T-cell (primary cell): ENCODE measurements at regions of chr1 and their contacts with region 1.

Region 1: GRCh38 chr1:156728597-156729462 is at the start of gene ISG20L2:
- DNase-seq: peak; percentile 63 to 99 (median 95)
- ATAC-seq: peak; percentile 91 to 94 (median 92)
- H3K4me3 ChIP-seq: peak within 1 kb of the TSS; percentile 91 to 97
- H3K4me3 Mint-ChIP-seq: no peak within 1 kb of the TSS
- H3K27ac ChIP-seq: peak within 1 kb of the TSS; percentile 100
- H3K27ac Mint-ChIP-seq: peak within 1 kb of the TSS; percentile 86 to 94
- H3K4me1 ChIP-seq: peaks cover 26 to 49% of the 10 kb centered on the region in 2 experiments
- H3K4me1 Mint-ChIP-seq: peaks cover 17 to 25% (median 23%) of the 10 kb centered on the region in 3 donors
- H3K27me3 ChIP-seq: no peaks in the 10 kb centered on the region
- H3K27me3 Mint-ChIP-seq: no peaks in the 10 kb centered on the region
- total RNA-seq, gene ISG20L2: 35.3 to 63.7 (median 44.3) TPM

Region 2: GRCh38 chr1:156689035-156689952 is 39.5 kb before region 1 on chr1:
- CTCF ChIA-PET with region 1: interaction called, 25 to 68 read pairs
- POLR2A ChIA-PET with region 1: interaction called in 1 of 2 experiments, 3 read pairs
- DNase-seq: peak; percentile 43 to 84 (median 70)
- ATAC-seq: peak; percentile 94 to 96 (median 96)
- H3K4me3 ChIP-seq: no peak overlapping the region
- H3K4me3 Mint-ChIP-seq: peak overlapping the region in 1 of 3 donors; percentile 25
- H3K27ac ChIP-seq: no peak overlapping the region
- H3K27ac Mint-ChIP-seq: peak overlapping the region in 1 of 2 donors; percentile 12
- H3K4me1 ChIP-seq: peaks cover 18 to 32% of the 10 kb centered on the region in 2 experiments
- H3K4me1 Mint-ChIP-seq: peaks cover 23 to 33% (median 26%) of the 10 kb centered on the region in 3 donors
- H3K27me3 ChIP-seq: peaks cover 5 to 84% of the 10 kb centered on the region in 2 experiments
- H3K27me3 Mint-ChIP-seq: peaks cover 41 to 61% of the 10 kb centered on the region in 2 donors

Region 3: DNA sequence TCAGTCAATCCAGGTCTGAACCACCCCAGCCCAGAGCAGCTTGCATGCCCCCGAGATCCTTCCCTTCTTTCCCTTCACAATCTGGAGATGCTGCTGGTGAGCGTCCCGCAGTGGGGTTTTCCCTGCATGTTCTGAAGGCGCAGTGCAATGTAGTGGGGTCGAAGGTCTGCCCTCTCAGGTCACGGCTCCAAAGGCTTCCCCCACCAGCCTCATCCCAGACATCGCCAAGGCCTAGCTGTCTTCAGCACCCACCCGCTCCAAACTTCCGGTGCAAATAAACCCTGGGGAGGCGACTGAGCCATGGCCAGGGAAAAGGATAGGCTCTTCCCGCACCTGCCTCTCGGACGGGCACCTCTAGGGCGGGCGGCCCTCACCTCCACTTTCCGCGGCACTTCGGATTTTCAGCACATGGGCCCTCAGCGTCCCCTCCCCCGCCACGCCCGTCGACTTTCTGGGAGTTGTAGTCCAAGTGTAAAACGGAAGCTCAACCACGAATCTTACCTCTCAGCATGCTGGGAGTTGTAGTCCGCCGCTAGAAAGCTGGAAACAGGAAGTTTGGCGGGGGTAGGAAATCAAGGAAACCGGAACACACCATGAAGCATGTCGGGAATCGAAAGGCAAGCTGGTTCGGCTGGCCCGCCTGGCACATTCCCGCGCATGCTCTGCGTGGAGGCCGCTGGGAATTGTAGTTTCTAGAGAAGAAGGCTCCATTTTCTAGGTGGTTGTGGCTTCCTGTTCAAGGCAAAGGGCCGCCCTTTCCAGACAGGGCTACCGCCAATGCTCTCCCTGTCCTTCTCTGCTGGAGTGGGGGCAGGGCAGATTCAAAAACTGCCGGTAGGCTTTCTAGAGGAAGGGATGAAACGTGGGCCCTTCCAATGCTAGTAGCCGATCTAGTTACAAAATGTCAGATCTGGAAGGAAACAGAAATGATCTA is 12.1 kb after region 1 on chr1 and contains the start of gene MRPL24:
- CTCF ChIA-PET with region 1: interaction called in 1 of 2 experiments, 43 read pairs
- POLR2A ChIA-PET with region 1: interaction called, 7 to 29 read pairs
- DNase-seq: peak; percentile 85 to 99 (median 97)
- ATAC-seq: peak; percentile 89 to 93 (median 91)
- H3K4me3 ChIP-seq: peak within 1 kb of the TSS; percentile 58 to 70
- H3K4me3 Mint-ChIP-seq: peak within 1 kb of the TSS; percentile 96 to 99 (median 97)
- H3K27ac ChIP-seq: peak within 1 kb of the TSS; percentile 89
- H3K27ac Mint-ChIP-seq: peak within 1 kb of the TSS; percentile 98 to 99
- H3K4me1 ChIP-seq: peaks cover 14 to 17% of the 10 kb centered on the region in 2 experiments
- H3K4me1 Mint-ChIP-seq: peaks cover 42 to 45% (median 43%) of the 10 kb centered on the region in 3 donors
- H3K27me3 ChIP-seq: no peaks in the 10 kb centered on the region
- H3K27me3 Mint-ChIP-seq: no peaks in the 10 kb centered on the region
- total RNA-seq, gene MRPL24: 23.8 to 66.6 (median 52.6) TPM

Region 4: DNA sequence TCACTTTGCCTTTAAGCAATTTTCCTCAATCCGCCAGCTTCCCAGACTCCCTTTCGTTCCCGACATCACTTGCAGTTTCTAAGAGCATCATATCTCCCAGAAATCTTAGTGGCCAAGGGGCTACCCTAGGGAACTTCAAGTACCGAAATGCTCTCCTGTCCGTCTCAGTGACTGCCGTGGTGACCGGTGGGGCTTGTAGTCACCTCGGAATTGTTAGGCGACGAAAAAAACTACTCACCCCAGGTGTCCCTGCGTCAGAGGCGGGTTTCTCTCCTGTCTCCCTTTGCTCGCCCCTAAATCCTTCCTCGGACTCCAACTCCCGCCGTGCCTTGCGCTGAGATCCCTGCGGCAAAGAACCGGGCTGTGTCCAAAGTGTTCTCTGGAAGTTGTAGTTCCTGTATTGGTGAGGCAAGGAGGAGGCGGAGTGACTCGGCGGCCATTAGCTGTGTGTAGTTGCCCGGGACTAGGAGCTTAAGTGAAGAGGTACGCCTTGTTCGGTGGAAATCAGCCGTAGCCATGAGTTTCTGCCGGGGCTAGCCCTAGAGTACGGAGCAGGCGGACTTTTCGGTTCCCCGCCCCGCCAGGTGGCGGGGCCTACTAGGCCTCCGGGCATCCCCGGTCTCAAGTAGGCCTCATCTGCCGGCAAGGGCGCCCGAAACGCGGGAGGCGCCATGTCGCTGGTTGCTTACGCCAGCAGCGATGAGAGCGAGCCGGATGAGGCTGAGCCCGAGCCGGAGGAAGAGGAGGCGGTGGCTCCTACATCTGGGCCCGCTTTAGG is 38.5 kb after region 1 on chr1 and contains the start of gene PRCC:
- CTCF ChIA-PET with region 1: interaction called in 1 of 2 experiments, 16 read pairs
- POLR2A ChIA-PET with region 1: interaction called, 4 to 7 read pairs
- DNase-seq: peak; percentile 92 to 100 (median 99)
- ATAC-seq: peak; percentile 92 to 94 (median 93)
- H3K4me3 ChIP-seq: peak within 1 kb of the TSS; percentile 93 to 96
- H3K4me3 Mint-ChIP-seq: no peak within 1 kb of the TSS
- H3K27ac ChIP-seq: peak within 1 kb of the TSS; percentile 97
- H3K27ac Mint-ChIP-seq: no peak within 1 kb of the TSS
- H3K4me1 ChIP-seq: peaks cover 19 to 36% of the 10 kb centered on the region in 2 experiments
- H3K4me1 Mint-ChIP-seq: peaks cover 34 to 41% (median 39%) of the 10 kb centered on the region in 3 donors
- H3K27me3 ChIP-seq: no peaks in the 10 kb centered on the region
- H3K27me3 Mint-ChIP-seq: no peaks in the 10 kb centered on the region
- total RNA-seq, gene PRCC: 55.3 to 67.7 (median 65.4) TPM